ENCODE measurements at regions of chr15 and their contacts with region 1.

Region 1: DNA sequence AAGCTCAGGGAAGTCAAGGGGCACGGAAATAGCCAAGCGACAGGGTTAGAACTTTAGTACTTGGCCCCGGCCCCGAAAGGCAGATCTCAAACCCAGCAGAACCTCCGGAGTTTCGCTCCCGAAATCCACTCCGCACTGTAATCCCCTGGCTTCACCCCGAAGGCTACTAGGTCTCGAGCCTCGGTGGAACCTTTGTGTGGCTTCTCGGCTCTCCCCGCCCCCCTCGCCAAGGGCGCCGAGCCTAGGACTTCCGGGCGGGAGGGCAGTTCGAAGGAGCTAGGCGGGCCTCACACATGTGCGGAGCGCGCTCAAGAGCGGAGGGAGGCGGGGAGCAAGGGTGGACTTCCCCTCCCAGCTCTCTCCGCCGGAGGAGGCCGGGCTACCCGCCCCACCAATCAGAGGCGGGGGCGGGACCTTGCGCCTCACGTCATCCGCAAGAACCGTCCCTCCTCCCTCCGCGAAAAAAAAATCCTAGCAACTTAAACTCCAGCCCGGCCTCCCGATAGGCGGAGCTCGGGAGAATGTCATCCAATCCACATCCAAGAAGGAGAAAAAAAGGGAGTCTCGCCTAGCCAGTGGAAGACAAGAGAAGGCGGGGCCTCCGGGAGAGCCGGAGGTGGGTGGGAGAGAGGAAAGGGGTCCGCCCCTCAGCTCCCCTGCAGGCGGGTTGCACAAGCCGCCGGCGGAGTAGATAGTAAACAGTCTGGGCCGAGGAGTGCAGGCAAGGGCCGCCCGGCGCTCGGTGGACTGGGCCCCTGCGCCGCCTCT is 2.4 kb upstream of the SIN3A start:
- DNase-seq: peak; percentile 97
- H3K4me3 Mint-ChIP-seq: peak overlapping the region; percentile 98
- H3K27ac Mint-ChIP-seq: peak overlapping the region; percentile 100
- H3K4me1 Mint-ChIP-seq: peaks cover 33% of the 10 kb centered on the region
- H3K27me3 Mint-ChIP-seq: no peaks in the 10 kb centered on the region

Region 2: DNA sequence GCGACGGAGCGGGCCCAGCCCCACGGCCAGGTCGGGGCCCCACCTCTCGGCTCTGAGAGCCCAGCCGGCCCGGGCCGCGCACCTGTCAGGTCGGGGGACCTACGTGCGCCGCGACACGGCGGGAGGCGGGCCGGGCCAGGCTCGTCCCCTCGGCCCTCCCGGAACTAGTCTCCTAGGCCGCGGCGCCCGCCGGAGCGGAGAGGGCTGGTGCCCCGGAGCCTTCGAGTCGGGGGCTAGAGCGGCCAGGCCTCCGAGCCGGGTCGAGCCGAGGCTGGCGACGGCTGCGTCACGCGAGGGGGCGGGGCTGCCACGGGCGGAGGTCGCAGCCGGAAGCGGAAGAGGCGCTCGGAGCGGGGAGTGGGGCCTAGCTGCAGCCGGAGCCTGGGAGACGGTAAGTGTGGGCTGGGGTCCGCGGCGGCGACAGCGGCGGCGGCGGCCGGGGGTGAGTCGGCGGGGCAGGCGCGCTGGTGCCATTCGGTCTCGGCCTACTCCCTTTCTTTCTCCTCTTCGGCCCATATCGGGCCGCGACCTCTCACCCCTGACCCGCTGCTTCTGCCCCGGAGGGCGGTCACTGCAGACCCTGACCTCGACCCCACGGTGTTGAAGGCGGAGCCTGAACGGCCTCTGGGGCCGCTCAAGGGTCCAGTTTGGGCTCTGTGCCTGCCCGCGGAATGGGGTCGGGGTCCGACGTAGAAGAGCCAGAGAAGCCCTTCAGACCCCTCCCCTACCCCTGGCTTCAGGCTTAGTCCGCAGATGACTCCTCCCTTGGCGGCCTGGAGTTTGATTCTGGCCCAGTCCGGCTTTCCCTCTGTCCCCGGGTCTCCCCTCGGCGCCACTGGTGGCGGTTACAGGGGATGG is 838.1 kb before region 1 on chr15 and contains the start of gene CLK3:
- intact Hi-C with region 1: loop called (anchors 2 kb)
- DNase-seq: peak; percentile 94
- H3K4me3 Mint-ChIP-seq: peak within 1 kb of the TSS; percentile 93
- H3K27ac Mint-ChIP-seq: peak within 1 kb of the TSS; percentile 95
- H3K4me1 Mint-ChIP-seq: peaks cover 33% of the 10 kb centered on the region
- H3K27me3 Mint-ChIP-seq: peaks cover 5% of the 10 kb centered on the region
- total RNA-seq, gene CLK3: 103 and 107 TPM in 2 replicates

Region 3: DNA sequence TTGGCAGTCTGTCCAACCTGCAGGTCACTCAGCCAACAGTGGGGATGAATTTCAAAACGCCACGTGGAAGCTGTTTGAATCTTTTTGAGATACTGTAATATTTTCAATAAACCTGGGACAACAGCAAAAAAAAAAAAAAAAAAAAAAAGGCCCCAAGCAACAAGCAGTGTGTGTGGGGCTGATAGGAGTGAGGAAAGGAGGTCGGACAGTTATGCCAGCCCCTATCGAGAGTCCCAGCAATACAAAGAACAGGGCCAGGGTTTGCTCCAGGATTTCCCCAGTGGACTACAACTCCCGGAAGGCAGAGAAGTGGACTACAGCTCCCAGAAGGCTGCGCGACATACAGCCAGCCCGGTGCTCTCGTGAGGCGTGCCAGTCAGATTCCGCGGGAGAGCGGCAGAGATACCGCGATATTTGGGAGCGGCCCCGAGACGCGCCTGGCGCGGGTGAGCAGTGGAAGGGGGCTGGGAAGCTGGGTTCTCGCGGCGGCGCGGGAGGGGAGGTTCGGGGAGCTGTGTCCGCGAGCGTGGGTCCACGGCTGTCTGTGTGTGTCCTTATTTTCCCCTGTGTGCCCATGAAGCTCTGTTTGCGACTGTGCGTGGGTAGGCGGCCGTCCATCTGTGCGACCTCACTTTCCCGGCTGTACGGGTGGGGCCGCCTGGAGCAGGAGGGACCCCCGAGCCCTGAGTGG is 430.6 kb before region 1 on chr15 and contains the start of gene PPCDC:
- intact Hi-C with region 1: loop called (anchors 5 kb)
- DNase-seq: peak; percentile 93
- H3K4me3 Mint-ChIP-seq: peak within 1 kb of the TSS; percentile 96
- H3K27ac Mint-ChIP-seq: peak within 1 kb of the TSS; percentile 90
- H3K4me1 Mint-ChIP-seq: peaks cover 23% of the 10 kb centered on the region
- H3K27me3 Mint-ChIP-seq: no peaks in the 10 kb centered on the region
- total RNA-seq, gene PPCDC: 25.0 and 27.1 TPM in 2 replicates

Region 4: DNA sequence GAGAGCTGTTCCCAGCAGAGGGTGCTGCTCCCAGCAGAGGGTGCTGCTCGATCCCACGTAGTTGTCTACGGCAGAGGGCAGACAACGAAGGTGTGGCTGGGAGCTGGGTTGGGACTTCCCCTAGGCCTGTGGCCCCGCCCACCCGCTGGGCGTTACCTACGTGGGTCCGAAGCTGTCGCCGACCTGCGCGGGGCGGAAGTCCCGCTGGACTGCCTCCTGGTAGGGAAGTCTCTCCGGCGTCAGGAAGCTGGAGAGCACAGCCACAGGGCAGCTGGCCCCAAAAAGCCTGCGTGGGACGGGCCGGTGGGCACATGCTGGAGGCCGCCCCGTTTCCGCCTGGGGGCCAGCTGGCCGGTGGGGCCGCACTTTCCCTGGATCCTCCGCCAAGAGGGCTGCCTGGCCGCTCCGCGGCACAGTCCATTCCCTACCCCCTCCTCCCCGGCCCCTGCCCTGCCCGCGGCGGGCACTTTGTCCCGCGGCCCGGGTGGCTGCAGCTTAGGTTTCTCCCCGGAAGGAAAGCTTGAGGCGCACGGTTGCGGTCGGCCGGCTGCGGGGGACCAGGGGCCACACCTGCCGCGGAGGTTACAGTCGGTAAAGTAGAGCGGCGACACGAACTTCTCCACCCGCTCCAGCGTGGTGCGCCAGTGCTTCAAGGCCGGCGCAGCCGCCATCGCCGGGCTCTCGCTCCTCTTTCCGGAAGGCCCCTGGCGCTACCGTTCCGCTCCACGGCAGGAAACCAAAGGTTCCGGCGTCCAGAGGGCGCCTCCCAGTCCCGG is 85.8 kb before region 1 on chr15 and contains the start of gene MAN2C1:
- intact Hi-C with region 1: loop called (anchors 1 kb)
- DNase-seq: peak; percentile 91
- H3K4me3 Mint-ChIP-seq: peak within 1 kb of the TSS; percentile 94
- H3K27ac Mint-ChIP-seq: peak within 1 kb of the TSS; percentile 92
- H3K4me1 Mint-ChIP-seq: peaks cover 16% of the 10 kb centered on the region
- H3K27me3 Mint-ChIP-seq: no peaks in the 10 kb centered on the region
- total RNA-seq, gene MAN2C1: 250 and 254 TPM in 2 replicates

Region 5: DNA sequence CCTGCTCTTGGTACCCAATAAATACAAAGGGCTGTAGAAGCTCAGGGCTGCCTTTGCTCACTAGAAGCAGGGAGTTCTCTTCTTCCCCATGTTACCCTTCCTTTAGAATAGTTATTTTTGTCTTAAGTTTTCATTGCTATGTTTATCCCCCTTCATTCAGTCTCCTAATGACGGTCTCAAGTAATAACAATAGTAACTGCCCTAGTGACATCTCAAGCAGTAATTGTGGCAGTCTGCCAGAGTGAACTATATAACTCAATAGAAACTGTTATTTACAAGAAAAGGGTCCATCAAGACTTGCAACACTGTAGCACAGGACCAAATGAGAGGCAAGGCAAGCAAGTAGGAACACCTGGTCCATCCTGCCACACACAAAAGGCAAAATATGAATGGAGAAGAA is 30.1 kb after region 1 on chr15:
- intact Hi-C with region 1: no loop called
- DNase-seq: no peak
- H3K4me3 Mint-ChIP-seq: no peak overlapping the region
- H3K27ac Mint-ChIP-seq: no peak overlapping the region
- H3K4me1 Mint-ChIP-seq: no peaks in the 10 kb centered on the region
- H3K27me3 Mint-ChIP-seq: no peaks in the 10 kb centered on the region

Region 6: DNA sequence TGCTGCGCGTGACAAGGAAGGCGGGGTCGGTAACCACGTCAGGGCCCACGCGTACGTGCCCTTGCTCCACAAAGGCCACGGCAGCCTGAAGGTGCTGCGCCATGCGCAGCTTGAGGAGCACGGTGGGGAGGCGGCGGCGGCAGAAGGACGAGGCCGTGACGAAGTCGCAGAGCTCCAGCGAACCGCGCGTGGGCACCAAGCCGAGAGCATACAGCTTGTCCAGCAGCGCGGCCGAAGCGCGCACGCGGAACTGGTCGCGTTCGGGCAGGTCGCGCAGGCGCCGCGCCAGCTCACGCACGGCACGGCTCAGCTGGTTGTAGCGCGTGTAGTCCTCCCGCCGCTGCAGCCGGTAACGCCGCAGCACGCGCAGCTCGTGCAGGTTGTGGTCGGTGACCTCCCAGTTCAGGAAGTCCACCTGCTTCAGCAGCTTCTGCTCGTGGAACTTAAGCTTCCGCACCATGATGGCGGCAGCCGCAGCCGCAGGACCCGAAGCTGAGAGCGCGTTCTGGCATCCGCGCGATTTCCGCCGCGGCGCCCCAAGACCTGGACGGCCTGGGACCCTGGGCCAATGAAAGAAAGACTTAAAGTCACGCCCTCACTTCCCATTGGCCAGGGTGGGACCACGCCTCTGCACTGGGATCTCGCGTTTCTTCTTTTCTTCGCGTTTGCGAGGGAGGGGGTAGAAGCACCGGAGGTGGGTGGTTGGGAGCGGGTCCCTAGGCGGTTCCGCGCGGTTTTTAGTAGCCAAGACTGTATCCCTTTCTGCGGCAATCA is 186.0 kb after region 1 on chr15 and contains the start of gene IMP3:
- intact Hi-C with region 1: loop called (anchors 1 kb)
- DNase-seq: peak; percentile 93
- H3K4me3 Mint-ChIP-seq: peak within 1 kb of the TSS; percentile 90
- H3K27ac Mint-ChIP-seq: peak within 1 kb of the TSS; percentile 94
- H3K4me1 Mint-ChIP-seq: peaks cover 39% of the 10 kb centered on the region
- H3K27me3 Mint-ChIP-seq: peaks cover 6% of the 10 kb centered on the region
- total RNA-seq, gene IMP3: 110 and 113 TPM in 2 replicates

Region 7: DNA sequence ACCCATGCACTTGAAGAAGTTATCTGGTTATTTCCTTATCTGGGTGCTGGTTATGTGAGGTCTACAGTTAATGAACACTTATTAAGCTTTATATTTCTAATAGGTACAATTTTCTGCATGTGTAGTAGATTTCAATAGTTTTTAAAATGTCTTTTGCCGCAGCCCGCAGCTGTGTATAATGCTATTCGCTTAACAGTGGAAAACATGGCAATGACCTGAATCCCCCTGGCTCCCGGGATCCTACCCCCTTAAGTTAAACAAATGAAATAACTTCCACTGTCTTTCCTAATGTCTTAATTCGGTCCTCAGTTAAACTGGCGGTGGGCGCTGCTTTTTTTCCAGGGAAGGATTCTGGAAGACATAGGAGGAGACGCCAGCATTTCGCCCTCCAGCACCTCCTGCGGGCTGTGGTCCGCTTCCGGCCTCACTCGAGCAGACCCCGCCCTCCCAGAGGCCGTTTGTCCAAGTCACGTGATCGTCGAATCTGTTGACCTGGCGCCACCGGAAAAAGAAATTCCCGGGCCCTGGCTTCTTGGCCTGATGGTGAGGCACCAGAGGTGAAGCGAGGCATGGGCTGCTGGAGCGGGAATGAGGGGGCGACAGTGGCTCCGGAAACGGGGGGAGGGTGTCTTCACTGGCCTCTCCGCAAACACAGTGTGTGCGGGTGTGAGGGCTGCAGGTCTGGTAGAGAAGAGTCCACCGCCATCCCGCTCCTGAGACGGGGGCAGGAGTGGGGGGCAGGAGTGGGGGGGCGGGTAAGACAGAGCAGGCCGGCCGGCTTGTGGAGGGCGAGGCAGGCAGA is 304.4 kb after region 1 on chr15:
- intact Hi-C with region 1: loop called (anchors 5 kb)
- DNase-seq: peak; percentile 60
- H3K4me3 Mint-ChIP-seq: peak overlapping the region; percentile 92
- H3K27ac Mint-ChIP-seq: peak overlapping the region; percentile 90
- H3K4me1 Mint-ChIP-seq: peaks cover 16% of the 10 kb centered on the region
- H3K27me3 Mint-ChIP-seq: peaks cover 6% of the 10 kb centered on the region